Activated T-helper 1 cell treated with anti-CD3 and anti-CD28 coated beads, Interleukin-12 subunit alpha, Interleukin-12 subunit beta, Interleukin-2, Interleukin-4 antibody, amounts not matched to agents 30 ng/mL and 10 ng/mL and 1 ng/mL, durations not matched to agents 14 hours and 24 hours and 36 hours (primary cell): ENCODE measurements at regions of chr2 and their contacts with region 1.

Region 1: DNA sequence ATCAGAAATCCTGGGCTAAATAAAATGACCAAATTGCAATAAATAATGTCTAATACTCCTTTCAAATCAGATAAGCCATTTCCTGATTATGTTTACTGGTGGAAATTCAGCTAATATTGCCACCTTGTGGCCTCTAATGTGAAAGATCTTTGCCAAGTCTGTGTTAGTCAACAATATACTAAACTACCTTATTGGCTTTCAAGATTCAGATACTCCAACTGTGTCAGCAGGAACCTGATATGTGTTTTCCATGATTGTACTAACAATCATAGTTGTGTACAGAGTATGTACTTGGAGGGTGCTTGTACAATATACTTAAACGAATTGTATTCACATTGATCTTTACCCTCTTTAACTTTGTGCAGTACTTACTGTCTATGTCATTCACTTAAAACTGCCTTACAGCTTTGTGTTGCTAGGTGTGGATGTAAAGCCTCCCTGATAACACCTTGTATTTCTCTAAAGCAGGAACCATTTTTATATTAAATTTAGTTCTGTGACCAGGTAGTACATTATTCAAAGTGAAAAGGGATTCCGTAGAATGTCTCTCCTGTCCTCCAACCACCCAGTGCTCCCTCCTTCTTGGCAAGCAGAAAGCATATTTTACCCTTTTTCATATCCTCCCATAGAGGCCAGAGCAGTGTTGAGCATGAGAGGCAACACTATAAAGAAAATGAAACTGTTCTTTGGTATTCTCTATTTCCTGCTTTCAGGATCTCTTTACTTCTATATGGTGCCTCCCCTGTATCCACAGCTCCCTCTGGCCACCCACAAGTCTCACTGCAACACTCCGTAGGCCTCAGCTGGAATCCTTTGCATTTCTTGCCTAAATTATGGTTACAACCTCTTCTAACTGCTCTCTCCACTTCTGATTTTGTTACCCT is 75.2 kb upstream of the C2orf15 start:
- DNase-seq: peak; percentile 6
- H3K4me3 Mint-ChIP-seq: no peak overlapping the region
- H3K27ac Mint-ChIP-seq: no peak overlapping the region
- H3K4me1 Mint-ChIP-seq: no peaks in the 10 kb centered on the region
- H3K27me3 Mint-ChIP-seq: peaks cover 6% of the 10 kb centered on the region

Region 2: GRCh38 chr2:98936353-98937351 is 129.7 kb before region 1 on chr2:
- intact Hi-C with region 1: loop called (anchors 10 kb)
- DNase-seq: no peak
- H3K4me3 Mint-ChIP-seq: peak overlapping the region; percentile 70
- H3K27ac Mint-ChIP-seq: no peak overlapping the region
- H3K4me1 Mint-ChIP-seq: peaks cover 16% of the 10 kb centered on the region
- H3K27me3 Mint-ChIP-seq: peaks cover 70% of the 10 kb centered on the region

Region 3: DNA sequence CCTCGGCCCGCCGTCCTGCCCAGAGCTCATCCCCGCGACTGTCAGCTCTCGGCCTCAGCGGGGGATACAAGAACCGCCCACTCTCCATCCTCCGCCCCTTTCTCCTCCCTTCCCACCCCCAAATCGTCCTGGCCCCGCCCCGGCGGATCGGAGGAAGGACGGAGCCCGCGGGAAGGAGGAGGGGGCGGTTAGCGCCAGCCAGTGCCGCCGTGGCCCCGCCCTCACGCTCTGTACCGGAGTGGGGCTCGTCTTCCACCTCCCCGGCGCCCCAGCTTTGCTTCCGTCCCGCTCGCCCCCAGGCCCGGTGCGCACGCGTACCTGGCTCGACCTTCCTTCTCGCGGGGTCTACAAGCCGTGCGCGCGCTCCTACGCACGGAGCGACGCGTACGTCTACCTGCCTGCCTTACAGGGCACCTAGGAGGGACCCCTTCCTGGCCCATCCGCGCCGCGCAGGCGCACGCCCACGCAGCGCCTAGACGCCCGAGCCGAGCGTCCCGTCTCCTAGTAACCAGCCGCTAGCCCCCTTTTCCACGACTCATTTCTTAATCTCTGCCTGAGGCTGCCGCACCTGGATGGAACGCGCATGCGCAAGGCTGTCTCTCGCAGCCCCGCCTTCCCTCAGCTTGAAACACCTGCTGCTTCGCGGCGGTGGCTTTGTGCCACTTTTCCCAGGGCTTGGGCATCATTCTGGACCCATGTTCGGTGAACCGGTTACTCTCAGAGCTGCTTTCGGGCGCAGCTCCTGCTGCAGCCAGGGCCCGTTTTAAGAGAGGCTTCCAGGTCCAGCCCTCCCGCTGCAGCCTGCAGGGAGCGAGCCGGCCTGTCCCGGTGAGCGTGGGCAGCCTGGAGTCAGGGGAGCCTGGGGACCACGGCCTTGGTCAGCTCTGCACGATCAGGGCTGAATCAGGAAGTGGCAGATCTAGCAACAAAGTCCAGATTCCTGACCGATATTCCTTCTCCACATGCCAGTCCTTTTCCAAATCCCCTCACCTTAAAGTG is 75.1 kb after region 1 on chr2 and contains the start of gene C2orf15:
- intact Hi-C with region 1: loop called (anchors 2 kb)
- DNase-seq: peak; percentile 93
- H3K4me3 Mint-ChIP-seq: peak within 1 kb of the TSS; percentile 96
- H3K27ac Mint-ChIP-seq: peak within 1 kb of the TSS; percentile 82
- H3K4me1 Mint-ChIP-seq: peaks cover 10% of the 10 kb centered on the region
- H3K27me3 Mint-ChIP-seq: peaks cover 14% of the 10 kb centered on the region
- total RNA-seq, gene C2orf15: 0.29 TPM in 1 of 2 replicates, not detected in the other